ENCODE measurements at regions of chr4 and their contacts with region 1.

Region 1: DNA sequence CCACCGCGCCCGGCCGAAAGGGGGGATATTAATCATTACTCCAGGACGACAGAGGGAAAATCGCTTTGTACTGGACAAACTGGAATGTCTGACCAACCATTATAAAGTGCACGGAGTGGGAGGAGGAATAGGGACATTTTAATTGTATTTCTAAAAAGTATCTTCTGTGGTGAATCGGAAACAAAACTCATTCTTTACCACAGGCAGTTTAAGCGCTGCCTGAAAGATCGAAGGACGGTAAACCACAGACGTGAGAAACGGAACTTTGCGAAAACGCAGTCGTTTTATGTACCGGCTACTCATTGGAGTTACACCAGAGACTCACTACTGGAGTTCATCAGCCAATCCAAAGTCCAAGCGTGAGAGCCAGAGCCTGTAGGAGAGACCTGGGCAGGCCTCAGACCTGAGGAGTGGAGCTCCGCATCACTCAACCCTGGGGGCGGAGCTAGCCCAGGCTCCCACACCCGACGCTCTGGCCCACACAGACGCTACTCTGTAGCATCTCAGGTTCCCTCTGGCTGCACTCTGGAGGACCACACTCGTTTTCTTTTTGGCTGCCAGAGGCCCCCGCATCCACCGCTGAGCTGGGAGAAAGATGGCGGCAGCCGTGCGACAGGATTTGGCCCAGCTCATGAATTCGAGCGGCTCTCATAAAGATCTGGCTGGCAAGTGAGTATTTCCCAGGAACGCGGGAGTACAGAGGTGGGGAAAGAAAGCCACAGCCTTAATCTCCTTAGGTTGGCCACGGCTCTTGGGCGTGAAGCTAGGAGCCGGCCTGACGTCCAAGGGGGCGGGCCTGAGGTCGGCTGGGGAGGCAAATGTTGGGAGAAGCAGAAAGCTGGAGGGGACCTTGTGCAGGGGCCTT is at the start of gene COPS4:
- DNase-seq: peak; percentile 98
- H3K4me3 Mint-ChIP-seq: peak within 1 kb of the TSS; percentile 95
- H3K27ac Mint-ChIP-seq: peak within 1 kb of the TSS; percentile 98
- H3K4me1 Mint-ChIP-seq: peaks cover 36% of the 10 kb centered on the region
- H3K27me3 Mint-ChIP-seq: no peaks in the 10 kb centered on the region
- total RNA-seq, gene COPS4: 37.1 to 38.6 TPM

Region 2: GRCh38 chr4:82428969-82429727 is 605.7 kb before region 1 on chr4:
- CTCF ChIA-PET with region 1: no interaction called
- intact Hi-C with region 1: loop called (anchors 1 kb)
- DNase-seq: peak; percentile 92
- H3K4me3 Mint-ChIP-seq: peak overlapping the region; percentile 93
- H3K27ac Mint-ChIP-seq: peak overlapping the region; percentile 99
- H3K4me1 Mint-ChIP-seq: peaks cover 64% of the 10 kb centered on the region
- H3K27me3 Mint-ChIP-seq: no peaks in the 10 kb centered on the region

Region 3: GRCh38 chr4:82851885-82852750 is 182.7 kb before region 1 on chr4:
- CTCF ChIA-PET with region 1: interaction called, 15 read pairs
- intact Hi-C with region 1: loop called (anchors 1 kb)
- DNase-seq: no peak
- H3K4me3 Mint-ChIP-seq: no peak overlapping the region
- H3K27ac Mint-ChIP-seq: no peak overlapping the region
- H3K4me1 Mint-ChIP-seq: peaks cover 6% of the 10 kb centered on the region
- H3K27me3 Mint-ChIP-seq: no peaks in the 10 kb centered on the region

Region 4: DNA sequence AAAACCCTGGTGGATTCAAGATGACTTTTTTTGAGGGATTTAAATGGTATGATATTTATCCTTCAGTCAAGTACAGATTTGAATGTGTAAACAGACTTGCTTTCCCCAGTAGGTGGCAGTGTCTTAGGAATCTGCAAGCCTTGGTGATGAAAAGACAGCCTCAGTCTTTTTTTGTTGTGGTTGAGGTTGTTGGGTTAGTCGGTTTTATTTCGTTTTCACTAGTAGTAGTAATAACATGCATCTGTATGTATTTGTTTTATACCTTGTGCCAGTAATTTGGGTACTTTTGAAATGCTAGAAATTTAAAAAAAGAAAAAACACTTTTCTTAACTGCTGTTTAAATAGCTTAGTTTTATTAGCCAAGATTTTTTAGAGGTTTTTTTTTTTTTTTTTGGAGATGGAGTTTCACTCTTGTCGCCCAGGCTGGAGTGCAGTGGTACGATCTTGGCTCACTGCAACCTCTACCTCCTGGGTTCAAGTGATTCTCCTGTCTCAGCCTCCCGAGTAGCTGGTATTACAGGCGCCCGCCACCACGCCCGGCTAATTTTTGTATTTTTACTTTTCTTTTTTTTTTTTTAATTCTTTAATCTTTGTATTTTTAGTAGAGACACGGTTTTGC is 39.3 kb after region 1 on chr4:
- CTCF ChIA-PET with region 1: interaction called, 6 read pairs
- intact Hi-C with region 1: loop called (anchors 1 kb)
- DNase-seq: peak; percentile 76
- H3K4me3 Mint-ChIP-seq: no peak overlapping the region
- H3K27ac Mint-ChIP-seq: no peak overlapping the region
- H3K4me1 Mint-ChIP-seq: peaks cover 13% of the 10 kb centered on the region
- H3K27me3 Mint-ChIP-seq: no peaks in the 10 kb centered on the region

Region 5: DNA sequence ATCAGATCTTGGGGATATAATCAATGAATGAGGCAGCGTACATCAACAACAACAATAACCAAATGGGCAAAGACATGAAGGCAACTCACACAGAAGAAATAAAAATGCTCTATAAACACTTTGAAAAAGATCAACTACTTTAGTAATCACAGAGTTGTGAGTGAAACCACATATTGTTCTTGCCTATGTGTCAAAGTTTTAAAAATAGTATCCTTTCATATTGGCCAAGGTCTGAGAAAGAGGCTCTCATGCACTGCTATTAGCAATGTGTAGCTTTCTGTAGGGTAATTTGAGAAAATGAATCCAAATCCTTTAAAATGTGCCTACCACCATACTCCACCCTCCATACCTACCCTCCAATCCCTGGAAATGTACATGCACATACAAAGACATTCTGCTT is 224.7 kb after region 1 on chr4:
- CTCF ChIA-PET with region 1: interaction called, 7 read pairs
- intact Hi-C with region 1: loop called (anchors 2 kb)
- DNase-seq: no peak
- H3K4me3 Mint-ChIP-seq: no peak overlapping the region
- H3K27ac Mint-ChIP-seq: no peak overlapping the region
- H3K4me1 Mint-ChIP-seq: no peaks in the 10 kb centered on the region
- H3K27me3 Mint-ChIP-seq: no peaks in the 10 kb centered on the region

Region 6: GRCh38 chr4:83484500-83485461 is 449.9 kb after region 1 on chr4 and contains the start of gene ABRAXAS1:
- CTCF ChIA-PET with region 1: no interaction called
- intact Hi-C with region 1: loop called (anchors 1 kb)
- DNase-seq: peak; percentile 92
- H3K4me3 Mint-ChIP-seq: peak within 1 kb of the TSS; percentile 99
- H3K27ac Mint-ChIP-seq: peak within 1 kb of the TSS; percentile 91
- H3K4me1 Mint-ChIP-seq: peaks cover 19% of the 10 kb centered on the region
- H3K27me3 Mint-ChIP-seq: no peaks in the 10 kb centered on the region
- total RNA-seq, gene ABRAXAS1: 19.7 to 20.9 TPM

Region 7: GRCh38 chr4:83947830-83948193 is 913.0 kb after region 1 on chr4:
- CTCF ChIA-PET with region 1: no interaction called
- intact Hi-C with region 1: no loop called
- DNase-seq: no peak
- H3K4me3 Mint-ChIP-seq: no peak overlapping the region
- H3K27ac Mint-ChIP-seq: no peak overlapping the region
- H3K4me1 Mint-ChIP-seq: no peaks in the 10 kb centered on the region
- H3K27me3 Mint-ChIP-seq: no peaks in the 10 kb centered on the region